ENCODE measurements at regions of chr12 and their contacts with region 1.

Region 1: DNA sequence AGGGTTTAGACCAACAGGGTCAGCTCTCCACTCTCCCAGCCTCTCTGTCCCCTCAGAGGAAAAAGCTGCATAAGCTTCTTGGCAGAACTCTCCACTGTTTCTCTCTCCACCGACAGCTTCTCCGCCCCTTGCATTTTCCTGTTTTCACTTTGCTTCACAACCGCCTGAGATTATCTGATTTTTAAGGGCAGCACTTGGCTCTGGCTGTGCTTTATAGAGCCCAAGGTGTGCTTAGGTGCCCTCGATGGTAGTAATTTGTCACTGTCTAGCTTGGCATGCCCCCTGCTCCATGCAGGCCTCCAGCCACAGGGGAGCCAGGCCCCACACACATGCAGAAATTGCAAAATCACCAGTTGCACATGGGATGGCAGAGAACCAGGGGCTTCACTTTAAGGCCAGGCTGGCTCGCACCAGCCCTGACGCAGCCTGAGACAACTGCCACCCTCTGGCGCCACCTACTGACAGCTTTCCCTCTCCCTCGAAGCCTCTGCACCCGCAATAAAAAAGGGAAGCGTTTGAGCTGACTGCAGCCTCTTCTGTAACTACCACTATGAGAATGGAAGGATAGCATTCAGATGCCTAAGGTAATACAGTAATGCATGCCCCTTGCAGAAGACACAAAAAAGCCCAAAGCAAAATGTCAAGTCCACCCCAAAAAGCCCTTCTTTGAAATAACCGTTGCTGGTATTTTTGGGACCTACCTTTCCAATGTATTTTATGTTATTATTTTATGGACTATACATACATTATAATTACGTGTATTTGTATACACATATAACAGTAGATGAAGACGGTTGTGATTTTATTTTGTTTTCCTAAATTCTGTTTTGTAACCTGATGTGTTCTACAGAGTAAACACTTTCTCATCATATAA is 32.0 kb upstream of the RIMBP2 start:
- DNase-seq: peak; percentile 76
- H3K4me3 ChIP-seq: no peak overlapping the region
- H3K27ac ChIP-seq: no peak overlapping the region
- H3K4me1 ChIP-seq: peaks cover 0 to 6% (median 2%) of the 10 kb centered on the region in 4 donors
- H3K27me3 ChIP-seq: peaks cover 0 to 11% (median 0%) of the 10 kb centered on the region in 3 donors
- CTCF ChIP-seq: peak in 3 of 4 experiments; percentile 50 to 77 (median 60)
- EP300 ChIP-seq: no peak
- POLR2A ChIP-seq: no peak

Region 2: GRCh38 chr12:130041983-130042812 is 705.9 kb before region 1 on chr12:
- intact Hi-C with region 1: loop called (anchors 10 kb)
- DNase-seq: no peak
- H3K4me3 ChIP-seq: no peak overlapping the region
- H3K27ac ChIP-seq: no peak overlapping the region
- H3K4me1 ChIP-seq: no peaks in the 10 kb centered on the region
- H3K27me3 ChIP-seq: peaks cover 7 to 83% (median 26%) of the 10 kb centered on the region in 3 donors
- CTCF ChIP-seq: peak in 3 of 4 experiments; percentile 13 to 68 (median 35)
- EP300 ChIP-seq: no peak
- POLR2A ChIP-seq: no peak

Measured in sigmoid colon (tissue), 7 donors.